Posterior vena cava (tissue), 2 donors: ENCODE measurements at regions of chr12 and their contacts with region 1.

Region 1: GRCh38 chr12:120774169-120774916 is 48.7 kb downstream of the ACADS start:
- DNase-seq: no peak

Region 2: GRCh38 chr12:120388691-120389481 is 385.5 kb before region 1 on chr12:
- intact Hi-C with region 1: no loop called
- DNase-seq: no peak

Region 3: GRCh38 chr12:120787889-120788288 is 13.5 kb after region 1 on chr12:
- intact Hi-C with region 1: loop called in 1 of 2 experiments (anchors 2 kb)
- DNase-seq: no peak

Region 4: DNA sequence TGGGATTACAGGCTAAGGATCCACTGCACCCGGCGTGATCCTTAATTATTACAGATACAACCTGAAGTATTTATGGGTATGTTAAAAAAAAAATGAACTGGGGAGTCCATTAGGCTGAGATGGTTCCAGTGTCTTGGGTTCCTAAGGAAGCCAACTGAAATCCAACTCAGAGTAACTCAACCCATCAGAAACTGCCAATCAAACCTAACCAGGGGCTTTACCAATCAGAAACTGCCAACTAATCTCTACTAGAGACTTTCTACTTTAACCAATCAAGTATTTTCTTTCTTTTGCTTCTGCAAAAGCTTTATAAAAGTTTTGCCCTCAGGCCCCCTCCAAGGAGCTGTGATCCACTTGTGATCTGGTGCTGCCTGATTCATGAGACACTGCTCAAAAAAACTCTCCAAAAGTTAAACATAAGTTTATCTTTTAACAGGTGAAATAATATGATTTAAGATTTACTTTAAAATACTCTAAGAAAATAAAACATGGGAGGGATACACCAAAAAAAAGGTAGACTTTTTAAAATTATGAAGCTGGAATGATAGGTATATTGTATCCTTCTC is 39.3 kb after region 1 on chr12:
- intact Hi-C with region 1: loop called in 1 of 2 experiments (anchors 2 kb)
- DNase-seq: no peak